ENCODE measurements at regions of chr14 and their contacts with region 1.

Region 1: DNA sequence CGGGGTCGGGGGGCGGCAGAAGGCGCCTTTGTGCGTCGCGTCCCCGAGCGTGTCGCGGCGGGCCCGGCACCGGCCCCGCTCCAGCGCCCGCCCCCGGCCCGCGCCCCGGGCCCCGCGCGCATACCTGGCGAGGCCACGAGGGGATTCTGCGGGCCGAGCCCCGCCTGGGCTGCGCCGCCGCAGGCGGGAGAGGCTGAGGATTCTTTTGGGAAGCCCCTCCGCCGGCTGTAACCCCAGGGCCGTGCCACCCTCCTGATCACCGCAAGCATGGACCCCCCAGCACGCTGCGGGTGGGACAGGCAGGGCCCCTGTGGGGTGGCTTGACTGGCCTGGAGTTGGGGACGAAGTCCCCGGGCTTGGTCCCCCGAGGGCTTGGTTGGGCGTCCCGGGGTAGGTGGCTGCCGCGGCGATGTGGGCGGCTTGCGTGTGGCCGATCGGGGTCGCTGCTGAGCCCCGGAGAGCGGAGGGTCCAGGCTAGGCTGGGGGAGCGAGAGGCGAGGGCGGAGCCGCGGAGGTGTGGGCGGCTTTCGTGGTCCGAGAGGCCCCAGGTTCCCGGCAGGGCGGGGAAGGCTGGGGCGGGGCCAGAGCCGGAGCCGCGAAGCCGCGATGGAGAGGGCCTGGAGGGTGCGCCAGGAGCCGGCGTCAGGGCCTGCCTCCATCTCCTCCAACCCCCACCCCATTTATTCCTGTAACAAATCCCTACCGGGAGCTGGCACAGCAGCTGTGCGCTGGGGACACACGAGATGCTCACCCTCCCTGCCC is 28.4 kb upstream of the GPR132 start:
- DNase-seq: peak; percentile 67 to 87 (median 81)
- ATAC-seq: peak in 3 of 4 donors; percentile 33 to 48 (median 45)
- H3K4me3 ChIP-seq: peak overlapping the region; percentile 37 to 87 (median 76)
- H3K27ac ChIP-seq: peak overlapping the region; percentile 16 to 95 (median 86)
- H3K4me1 ChIP-seq: peaks cover 7 to 47% (median 36%) of the 10 kb centered on the region in 12 donors
- H3K27me3 ChIP-seq: no peaks in the 10 kb centered on the region
- CTCF ChIP-seq: peak in 11 of 12 donors; percentile 31 to 68 (median 53)
- POLR2A ChIP-seq: no peak

Region 2: GRCh38 chr14:105153271-105153731 is 59.7 kb after region 1 on chr14:
- intact Hi-C with region 1: loop called in 4 of 10 experiments (anchors 2 to 10 kb)
- DNase-seq: peak; percentile 77 to 83 (median 82)
- ATAC-seq: peak; percentile 67 to 90 (median 74)
- H3K4me3 ChIP-seq: no peak overlapping the region
- H3K27ac ChIP-seq: peak overlapping the region; percentile 48 to 88 (median 78)
- H3K4me1 ChIP-seq: peaks cover 6 to 43% (median 25%) of the 10 kb centered on the region in 12 donors
- H3K27me3 ChIP-seq: no peaks in the 10 kb centered on the region
- CTCF ChIP-seq: no peak
- POLR2A ChIP-seq: no peak

Region 3: GRCh38 chr14:105161964-105162668 is 68.5 kb after region 1 on chr14:
- intact Hi-C with region 1: loop called in 7 of 10 experiments (anchors 5 to 10 kb)
- DNase-seq: no peak
- ATAC-seq: peak; percentile 20 to 65 (median 48)
- H3K4me3 ChIP-seq: no peak overlapping the region
- H3K27ac ChIP-seq: no peak overlapping the region
- H3K4me1 ChIP-seq: peaks cover 0 to 35% (median 17%) of the 10 kb centered on the region in 12 donors
- H3K27me3 ChIP-seq: peaks cover 0 to 11% (median 0%) of the 10 kb centered on the region in 9 donors
- CTCF ChIP-seq: no peak
- POLR2A ChIP-seq: no peak

Region 4: GRCh38 chr14:105168979-105169507 is 75.4 kb after region 1 on chr14:
- intact Hi-C with region 1: loop called in 7 of 10 experiments (anchors 2 to 10 kb)
- DNase-seq: peak in 4 of 5 donors; percentile 59 to 78 (median 66)
- ATAC-seq: peak in 3 of 4 donors; percentile 11 to 24 (median 23)
- H3K4me3 ChIP-seq: peak overlapping the region in 11 of 12 donors; percentile 7 to 70 (median 46)
- H3K27ac ChIP-seq: peak overlapping the region in 10 of 12 donors; percentile 39 to 82 (median 68)
- H3K4me1 ChIP-seq: peaks cover 14 to 59% (median 38%) of the 10 kb centered on the region in 12 donors
- H3K27me3 ChIP-seq: peaks cover 0 to 36% (median 0%) of the 10 kb centered on the region in 9 donors
- CTCF ChIP-seq: peak in 11 of 12 donors; percentile 40 to 73 (median 51)
- POLR2A ChIP-seq: no peak

Region 5: DNA sequence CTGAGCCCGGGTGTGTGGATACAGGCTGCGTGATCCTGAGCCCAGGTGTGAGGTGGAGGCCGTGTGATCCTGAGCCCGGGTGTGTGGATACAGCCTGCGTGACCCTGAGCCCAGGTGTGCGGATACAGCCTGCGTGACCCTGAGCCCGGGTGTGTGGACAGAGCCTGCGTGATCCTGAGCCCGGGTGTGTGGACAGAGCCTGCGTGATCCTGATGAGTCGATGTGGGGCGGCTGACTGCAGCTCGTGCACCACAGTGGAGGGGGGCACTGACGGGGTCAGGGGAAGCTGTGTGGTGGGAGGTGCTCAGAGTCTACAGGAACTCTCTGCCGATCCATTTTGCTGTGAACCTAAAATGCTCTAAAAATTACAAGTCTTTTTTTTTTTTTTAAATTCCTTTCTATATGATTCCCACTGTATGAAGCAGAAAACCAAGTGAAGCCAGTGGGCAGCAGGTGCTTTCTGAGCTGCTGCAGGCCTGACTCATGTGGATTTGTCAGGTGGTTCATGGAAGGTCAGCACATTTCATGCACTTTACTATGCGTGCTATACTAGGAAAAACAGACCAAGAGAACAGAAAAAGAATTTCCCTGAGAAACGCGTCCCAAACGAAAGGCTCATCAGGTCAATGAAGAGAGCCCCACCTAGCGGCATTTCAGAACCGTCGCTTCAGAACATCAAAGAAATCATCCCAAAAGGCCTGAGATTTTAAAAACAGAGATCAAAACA is 187.9 kb after region 1 on chr14:
- intact Hi-C with region 1: loop called in 5 of 10 experiments (anchors 2 to 10 kb)
- DNase-seq: no peak
- ATAC-seq: peak in 1 of 4 donors; percentile 22
- H3K4me3 ChIP-seq: no peak overlapping the region
- H3K27ac ChIP-seq: no peak overlapping the region
- H3K4me1 ChIP-seq: peaks cover 0 to 16% (median 10%) of the 10 kb centered on the region in 12 donors
- H3K27me3 ChIP-seq: no peaks in the 10 kb centered on the region
- CTCF ChIP-seq: peak; percentile 40 to 70 (median 58)
- POLR2A ChIP-seq: no peak

Region 6: DNA sequence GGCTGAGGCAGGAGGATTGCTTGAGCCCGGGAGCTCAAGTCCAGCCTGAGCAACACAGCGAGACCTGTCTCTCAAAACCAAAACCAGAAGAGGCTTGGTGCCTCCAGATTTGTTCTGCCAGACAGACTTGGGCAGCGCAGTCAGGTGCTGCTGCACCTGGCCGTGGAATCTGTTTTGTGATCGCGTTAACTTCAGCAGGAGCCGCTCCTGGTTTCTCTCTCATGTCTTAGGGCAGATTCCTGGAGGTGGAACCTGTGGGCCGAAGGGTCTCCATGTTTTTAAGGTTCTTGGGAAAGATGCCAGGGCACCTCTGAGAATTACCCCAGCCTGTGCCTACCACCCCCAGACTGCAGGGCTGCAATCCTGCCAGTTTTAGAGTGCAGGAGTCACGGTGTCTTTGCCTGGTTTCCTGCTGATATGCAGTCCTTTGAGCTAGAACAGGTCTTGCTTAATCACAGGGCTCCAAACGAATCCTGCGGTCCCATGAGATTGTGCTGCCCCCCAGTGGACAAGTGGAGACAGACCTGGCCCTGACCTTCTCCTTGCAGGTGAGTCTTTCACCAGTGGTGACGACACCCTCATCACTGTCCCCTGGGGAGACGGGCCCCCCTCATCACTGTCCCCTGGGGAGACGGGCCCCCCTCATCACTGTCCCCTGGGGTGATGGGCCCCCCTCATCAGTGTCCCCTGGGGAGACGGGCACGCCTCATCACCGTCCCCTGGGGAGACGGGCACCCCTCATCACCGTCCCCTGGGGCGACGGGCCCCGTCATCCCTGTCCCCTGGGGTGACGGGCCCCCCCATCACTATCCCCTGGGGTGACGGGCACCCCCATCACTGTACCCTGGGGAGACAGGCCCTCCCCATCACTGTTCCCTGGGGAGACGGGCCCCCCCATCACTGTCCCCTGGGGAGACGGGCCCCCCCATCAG is 258.6 kb after region 1 on chr14:
- intact Hi-C with region 1: loop called in 9 of 10 experiments (anchors 2 to 5 kb)
- DNase-seq: peak; percentile 80 to 85 (median 82)
- ATAC-seq: peak; percentile 81 to 91 (median 85)
- H3K4me3 ChIP-seq: no peak overlapping the region
- H3K27ac ChIP-seq: peak overlapping the region in 4 of 12 donors; percentile 22 to 59 (median 48)
- H3K4me1 ChIP-seq: peaks cover 0 to 8% (median 5%) of the 10 kb centered on the region in 12 donors
- H3K27me3 ChIP-seq: no peaks in the 10 kb centered on the region
- CTCF ChIP-seq: peak; percentile 73 to 90 (median 82)
- POLR2A ChIP-seq: no peak

Region 7: GRCh38 chr14:105527661-105528581 is 434.3 kb after region 1 on chr14:
- intact Hi-C with region 1: loop called in 2 of 10 experiments (anchors 10 kb)
- DNase-seq: peak; percentile 74 to 91 (median 85)
- ATAC-seq: peak; percentile 59 to 83 (median 70)
- H3K4me3 ChIP-seq: peak overlapping the region; percentile 45 to 77 (median 70)
- H3K27ac ChIP-seq: peak overlapping the region in 11 of 12 donors; percentile 24 to 78 (median 67)
- H3K4me1 ChIP-seq: peaks cover 11 to 41% (median 27%) of the 10 kb centered on the region in 12 donors
- H3K27me3 ChIP-seq: peaks cover 0 to 28% (median 0%) of the 10 kb centered on the region in 9 donors
- CTCF ChIP-seq: peak; percentile 71 to 96 (median 90)
- POLR2A ChIP-seq: peak in 1 of 2 donors; percentile 40

Region 8: DNA sequence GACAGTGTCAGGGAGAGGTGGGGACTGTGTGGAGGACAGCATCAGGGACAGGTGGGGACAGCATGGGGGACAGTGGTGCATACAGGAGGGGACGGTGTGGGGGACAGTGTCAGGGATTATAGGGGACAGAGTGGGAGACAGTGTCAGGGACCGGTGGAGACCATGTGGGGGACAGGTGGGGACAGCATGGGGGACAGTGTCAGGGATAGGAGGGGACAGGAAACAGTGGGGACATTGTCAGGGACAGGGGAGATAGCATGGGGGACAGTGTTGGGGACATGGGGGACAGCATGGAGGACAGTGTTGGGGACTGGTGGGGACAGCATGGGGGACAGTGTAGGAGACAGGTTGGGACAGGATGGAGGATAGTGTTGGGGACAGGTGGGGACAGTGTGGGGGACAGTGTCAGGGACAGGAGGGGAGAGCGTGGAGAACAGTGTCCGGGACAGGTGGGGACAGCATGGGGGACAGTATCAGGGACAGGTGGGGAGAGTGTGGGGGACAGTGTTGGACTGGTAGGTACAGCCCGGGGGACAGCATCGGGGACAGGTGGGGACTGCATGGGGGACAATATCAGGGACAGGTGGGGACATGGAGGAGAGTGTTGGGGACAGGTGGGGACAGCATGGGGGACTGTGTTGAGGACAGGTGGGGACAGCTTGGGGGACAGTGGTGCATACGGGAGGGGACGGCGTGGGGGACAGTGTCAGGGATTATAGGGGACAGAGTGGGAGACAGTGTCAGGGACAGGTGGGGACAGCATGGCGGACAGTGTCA is 644.8 kb after region 1 on chr14:
- intact Hi-C with region 1: no loop called
- DNase-seq: no peak
- ATAC-seq: peak in 2 of 4 donors; percentile 16 to 18
- H3K4me3 ChIP-seq: no peak overlapping the region
- H3K27ac ChIP-seq: no peak overlapping the region
- H3K4me1 ChIP-seq: no peaks in the 10 kb centered on the region
- H3K27me3 ChIP-seq: no peaks in the 10 kb centered on the region
- CTCF ChIP-seq: no peak
- POLR2A ChIP-seq: no peak

Measured in heart left ventricle (tissue), 16 donors.